ENCODE measurements at regions of chr1 and their contacts with region 1.

Region 1: GRCh38 chr1:203607533-203607873 is 19.1 kb upstream of the ATP2B4 start:
- DNase-seq: no peak
- ATAC-seq: no peak
- H3K4me3 ChIP-seq: no peak overlapping the region
- H3K4me3 Mint-ChIP-seq: peak overlapping the region in 5 of 10 donors; percentile 57 to 81 (median 72)
- H3K27ac ChIP-seq: no peak overlapping the region
- H3K27ac Mint-ChIP-seq: peak overlapping the region in 4 of 9 donors; percentile 51 to 93 (median 89)
- H3K4me1 ChIP-seq: peaks cover 11 to 21% of the 10 kb centered on the region in 2 donors
- H3K4me1 Mint-ChIP-seq: peaks cover 21 to 64% (median 33%) of the 10 kb centered on the region in 7 donors
- H3K27me3 ChIP-seq: no peaks in the 10 kb centered on the region
- H3K27me3 Mint-ChIP-seq: peaks cover 0 to 2% (median 0%) of the 10 kb centered on the region in 5 donors

Region 2: DNA sequence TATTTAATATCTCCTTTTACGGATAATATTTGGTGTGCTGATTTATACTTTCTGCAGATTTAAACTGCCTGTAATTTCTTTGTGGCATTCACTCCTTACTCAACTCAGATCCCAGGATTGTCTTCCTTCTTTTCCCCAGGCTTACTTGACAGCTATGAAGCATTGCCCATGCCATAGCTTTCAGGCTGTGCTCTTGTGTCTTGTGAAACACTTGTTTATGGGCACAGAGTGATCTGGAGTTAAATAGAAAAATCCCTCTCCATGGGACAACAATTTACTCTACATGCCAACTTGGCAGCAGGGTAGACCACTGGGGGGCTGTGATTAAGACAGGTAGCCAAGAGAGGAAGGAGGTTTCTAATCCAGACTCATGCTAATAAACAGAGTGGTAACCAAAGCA is 1201.6 kb before region 1 on chr1:
- CTCF ChIA-PET with region 1: no interaction called
- POLR2A ChIA-PET with region 1: no interaction called
- intact Hi-C with region 1: no loop called
- DNase-seq: no peak
- ATAC-seq: no peak
- H3K4me3 ChIP-seq: no peak overlapping the region
- H3K4me3 Mint-ChIP-seq: no peak overlapping the region
- H3K27ac ChIP-seq: no peak overlapping the region
- H3K27ac Mint-ChIP-seq: no peak overlapping the region
- H3K4me1 ChIP-seq: no peaks in the 10 kb centered on the region
- H3K4me1 Mint-ChIP-seq: peaks cover 0 to 21% (median 18%) of the 10 kb centered on the region in 7 donors
- H3K27me3 ChIP-seq: no peaks in the 10 kb centered on the region
- H3K27me3 Mint-ChIP-seq: no peaks in the 10 kb centered on the region

Region 3: DNA sequence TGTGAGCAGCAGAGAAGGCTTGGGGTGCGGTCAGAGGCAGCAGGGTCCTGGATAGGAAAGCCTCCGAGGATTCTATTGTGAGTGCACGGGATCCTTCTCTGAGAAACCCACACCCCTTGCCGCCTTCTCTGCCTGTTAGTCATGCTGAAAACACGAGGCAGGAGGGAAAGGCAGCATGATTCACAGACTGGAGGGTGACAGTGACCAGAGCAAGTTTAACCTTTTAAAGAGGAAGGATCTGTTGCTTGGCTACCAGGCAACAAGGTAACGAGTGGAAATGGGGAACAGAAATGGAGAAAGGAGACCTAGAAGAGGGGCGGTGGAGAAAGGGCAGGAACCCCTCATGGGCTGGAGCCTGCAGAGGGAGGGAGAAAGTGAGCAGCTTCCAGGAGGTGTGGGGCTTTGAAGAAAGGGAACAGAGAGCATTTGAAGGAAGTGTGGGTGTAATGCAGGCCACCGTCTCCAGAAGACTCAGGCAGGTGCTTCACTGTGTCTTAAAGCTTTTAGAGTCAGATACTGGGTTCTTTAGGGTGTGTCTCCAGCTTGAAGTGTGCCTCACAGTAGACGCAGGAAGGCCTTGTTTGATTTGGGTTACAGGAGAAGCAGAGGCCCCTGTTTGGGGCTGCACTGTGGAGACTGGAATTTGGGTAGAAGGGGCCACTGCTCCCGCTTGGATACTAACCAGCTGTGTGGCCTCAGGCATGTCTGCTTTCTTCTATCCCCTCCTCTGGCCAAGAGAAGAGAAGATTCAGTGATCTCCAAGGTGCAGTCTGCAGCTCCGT is 94.5 kb before region 1 on chr1:
- CTCF ChIA-PET with region 1: no interaction called
- POLR2A ChIA-PET with region 1: interaction called, 3 read pairs
- intact Hi-C with region 1: loop called in 1 of 2 experiments (anchors 1 kb)
- DNase-seq: peak in 7 of 9 donors; percentile 37 to 67 (median 54)
- ATAC-seq: peak; percentile 81
- H3K4me3 ChIP-seq: peak overlapping the region; percentile 27
- H3K4me3 Mint-ChIP-seq: peak overlapping the region; percentile 41 to 93 (median 80)
- H3K27ac ChIP-seq: peak overlapping the region; percentile 68
- H3K27ac Mint-ChIP-seq: peak overlapping the region; percentile 85 to 98 (median 95)
- H3K4me1 ChIP-seq: peaks cover 0 to 28% of the 10 kb centered on the region in 2 donors
- H3K4me1 Mint-ChIP-seq: peaks cover 24 to 58% (median 52%) of the 10 kb centered on the region in 7 donors
- H3K27me3 ChIP-seq: no peaks in the 10 kb centered on the region
- H3K27me3 Mint-ChIP-seq: no peaks in the 10 kb centered on the region

Region 4: GRCh38 chr1:203593723-203594122 is 13.8 kb before region 1 on chr1:
- CTCF ChIA-PET with region 1: interaction called, 5 read pairs
- POLR2A ChIA-PET with region 1: interaction called, 7 read pairs
- intact Hi-C with region 1: loop called in 1 of 2 experiments (anchors 1 kb)
- DNase-seq: peak in 7 of 9 donors; percentile 17 to 42 (median 25)
- ATAC-seq: peak; percentile 79
- H3K4me3 ChIP-seq: no peak overlapping the region
- H3K4me3 Mint-ChIP-seq: no peak overlapping the region
- H3K27ac ChIP-seq: no peak overlapping the region
- H3K27ac Mint-ChIP-seq: peak overlapping the region in 4 of 9 donors; percentile 20 to 70 (median 50)
- H3K4me1 ChIP-seq: no peaks in the 10 kb centered on the region
- H3K4me1 Mint-ChIP-seq: peaks cover 0 to 32% (median 7%) of the 10 kb centered on the region in 7 donors
- H3K27me3 ChIP-seq: no peaks in the 10 kb centered on the region
- H3K27me3 Mint-ChIP-seq: peaks cover 0 to 4% (median 0%) of the 10 kb centered on the region in 5 donors

Region 5: DNA sequence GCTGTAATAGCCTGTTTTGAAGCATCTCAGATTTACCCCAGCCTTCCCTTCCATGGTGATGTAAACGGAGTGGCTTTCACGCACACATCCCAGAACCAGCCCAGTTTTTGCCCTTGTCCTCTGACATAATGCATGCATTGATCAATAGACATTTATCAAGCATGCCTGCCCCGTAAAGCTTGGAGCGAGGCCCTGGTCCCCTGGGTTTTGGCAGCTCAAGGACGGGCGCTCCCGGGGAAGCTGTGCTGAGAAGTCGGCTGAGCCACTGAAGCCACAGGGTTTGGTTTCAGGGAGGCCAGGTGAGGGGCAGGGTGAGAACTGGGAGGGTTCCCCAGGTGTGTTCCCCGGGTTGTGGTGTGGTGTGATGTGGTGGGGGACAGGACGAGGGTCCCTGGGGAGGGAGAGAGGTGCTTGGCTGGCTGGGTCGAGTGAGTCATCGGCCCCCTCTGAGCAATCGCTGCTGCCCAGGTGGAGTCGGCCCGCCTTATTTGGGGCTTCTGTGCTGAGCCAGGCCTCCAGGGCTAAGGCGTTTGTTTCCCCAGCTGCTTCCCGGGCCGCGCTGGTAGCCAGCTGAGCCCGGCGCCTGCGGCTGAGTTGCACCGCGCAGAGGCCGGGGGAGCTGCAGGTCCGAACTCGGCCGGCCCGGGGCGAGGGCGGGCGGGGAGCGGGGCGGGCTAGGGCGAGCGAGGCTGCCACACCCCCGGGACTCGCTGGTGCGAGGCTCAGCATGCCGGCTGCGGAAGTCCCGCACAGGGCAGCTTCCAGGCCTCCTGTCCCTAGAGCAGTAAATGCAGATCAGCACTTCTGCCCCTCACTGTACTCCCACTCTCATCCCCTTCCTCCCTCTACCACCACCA is 42.7 kb after region 1 on chr1:
- CTCF ChIA-PET with region 1: no interaction called
- POLR2A ChIA-PET with region 1: interaction called, 3 read pairs
- intact Hi-C with region 1: loop called (anchors 1 kb)
- DNase-seq: peak; percentile 24 to 63 (median 32)
- ATAC-seq: peak; percentile 66
- H3K4me3 ChIP-seq: peak overlapping the region; percentile 47
- H3K4me3 Mint-ChIP-seq: peak overlapping the region; percentile 73 to 92 (median 82)
- H3K27ac ChIP-seq: peak overlapping the region; percentile 70
- H3K27ac Mint-ChIP-seq: peak overlapping the region; percentile 79 to 94 (median 91)
- H3K4me1 ChIP-seq: peaks cover 51 to 72% of the 10 kb centered on the region in 2 donors
- H3K4me1 Mint-ChIP-seq: peaks cover 39 to 78% (median 68%) of the 10 kb centered on the region in 7 donors
- H3K27me3 ChIP-seq: no peaks in the 10 kb centered on the region
- H3K27me3 Mint-ChIP-seq: no peaks in the 10 kb centered on the region

Region 6: GRCh38 chr1:203673550-203674427 is 66.3 kb after region 1 on chr1:
- CTCF ChIA-PET with region 1: interaction called, 3 read pairs
- POLR2A ChIA-PET with region 1: no interaction called
- intact Hi-C with region 1: loop called in 1 of 2 experiments (anchors 1 kb)
- DNase-seq: peak; percentile 27 to 79 (median 73)
- ATAC-seq: peak; percentile 91
- H3K4me3 ChIP-seq: no peak overlapping the region
- H3K4me3 Mint-ChIP-seq: peak overlapping the region; percentile 57 to 87 (median 77)
- H3K27ac ChIP-seq: peak overlapping the region; percentile 53
- H3K27ac Mint-ChIP-seq: peak overlapping the region; percentile 87 to 99 (median 95)
- H3K4me1 ChIP-seq: peaks cover 52 to 54% of the 10 kb centered on the region in 2 donors
- H3K4me1 Mint-ChIP-seq: peaks cover 50 to 81% (median 71%) of the 10 kb centered on the region in 7 donors
- H3K27me3 ChIP-seq: no peaks in the 10 kb centered on the region
- H3K27me3 Mint-ChIP-seq: no peaks in the 10 kb centered on the region

Region 7: GRCh38 chr1:203682473-203683383 is 75.2 kb after region 1 on chr1:
- CTCF ChIA-PET with region 1: interaction called, 3 read pairs
- POLR2A ChIA-PET with region 1: no interaction called
- intact Hi-C with region 1: loop called (anchors 1 kb)
- DNase-seq: peak; percentile 26 to 89 (median 80)
- ATAC-seq: peak; percentile 97
- H3K4me3 ChIP-seq: no peak overlapping the region
- H3K4me3 Mint-ChIP-seq: peak overlapping the region; percentile 19 to 72 (median 54)
- H3K27ac ChIP-seq: peak overlapping the region; percentile 67
- H3K27ac Mint-ChIP-seq: peak overlapping the region; percentile 82 to 96 (median 95)
- H3K4me1 ChIP-seq: peaks cover 24 to 26% of the 10 kb centered on the region in 2 donors
- H3K4me1 Mint-ChIP-seq: peaks cover 32 to 57% (median 51%) of the 10 kb centered on the region in 7 donors
- H3K27me3 ChIP-seq: no peaks in the 10 kb centered on the region
- H3K27me3 Mint-ChIP-seq: no peaks in the 10 kb centered on the region

Region 8: GRCh38 chr1:204254031-204254661 is 646.6 kb after region 1 on chr1:
- CTCF ChIA-PET with region 1: no interaction called
- POLR2A ChIA-PET with region 1: no interaction called
- intact Hi-C with region 1: no loop called
- DNase-seq: no peak
- ATAC-seq: peak; percentile 62
- H3K4me3 ChIP-seq: no peak overlapping the region
- H3K4me3 Mint-ChIP-seq: no peak overlapping the region
- H3K27ac ChIP-seq: no peak overlapping the region
- H3K27ac Mint-ChIP-seq: no peak overlapping the region
- H3K4me1 ChIP-seq: no peaks in the 10 kb centered on the region
- H3K4me1 Mint-ChIP-seq: peaks cover 0 to 4% (median 0%) of the 10 kb centered on the region in 7 donors
- H3K27me3 ChIP-seq: no peaks in the 10 kb centered on the region
- H3K27me3 Mint-ChIP-seq: peaks cover 0 to 14% (median 0%) of the 10 kb centered on the region in 5 donors

Region 9: GRCh38 chr1:204384994-204385352 is 777.5 kb after region 1 on chr1:
- CTCF ChIA-PET with region 1: no interaction called
- POLR2A ChIA-PET with region 1: no interaction called
- intact Hi-C with region 1: no loop called
- DNase-seq: no peak
- ATAC-seq: no peak
- H3K4me3 ChIP-seq: no peak overlapping the region
- H3K4me3 Mint-ChIP-seq: no peak overlapping the region
- H3K27ac ChIP-seq: no peak overlapping the region
- H3K27ac Mint-ChIP-seq: no peak overlapping the region
- H3K4me1 ChIP-seq: no peaks in the 10 kb centered on the region
- H3K4me1 Mint-ChIP-seq: peaks cover 3 to 9% (median 7%) of the 10 kb centered on the region in 7 donors
- H3K27me3 ChIP-seq: no peaks in the 10 kb centered on the region
- H3K27me3 Mint-ChIP-seq: peaks cover 0 to 11% (median 0%) of the 10 kb centered on the region in 5 donors